Esophagus muscularis mucosa (tissue), 4 donors: ENCODE measurements at regions of chr17 and their contacts with region 1.

Region 1: GRCh38 chr17:7280519-7281429 is 744 bp upstream of the SLC2A4 start:
- DNase-seq: peak; percentile 96
- H3K4me3 ChIP-seq: peak overlapping the region; percentile 64 to 77 (median 69)
- H3K27ac ChIP-seq: peak overlapping the region; percentile 95 to 98 (median 96)
- H3K4me1 ChIP-seq: peaks cover 47 to 57% (median 53%) of the 10 kb centered on the region in 4 donors
- H3K27me3 ChIP-seq: peaks cover 0 to 7% (median 0%) of the 10 kb centered on the region in 4 donors
- CTCF ChIP-seq: peak in 2 of 3 experiments; percentile 95 to 98
- EP300 ChIP-seq: no peak
- POLR2A ChIP-seq: peak; percentile 4

Region 2: DNA sequence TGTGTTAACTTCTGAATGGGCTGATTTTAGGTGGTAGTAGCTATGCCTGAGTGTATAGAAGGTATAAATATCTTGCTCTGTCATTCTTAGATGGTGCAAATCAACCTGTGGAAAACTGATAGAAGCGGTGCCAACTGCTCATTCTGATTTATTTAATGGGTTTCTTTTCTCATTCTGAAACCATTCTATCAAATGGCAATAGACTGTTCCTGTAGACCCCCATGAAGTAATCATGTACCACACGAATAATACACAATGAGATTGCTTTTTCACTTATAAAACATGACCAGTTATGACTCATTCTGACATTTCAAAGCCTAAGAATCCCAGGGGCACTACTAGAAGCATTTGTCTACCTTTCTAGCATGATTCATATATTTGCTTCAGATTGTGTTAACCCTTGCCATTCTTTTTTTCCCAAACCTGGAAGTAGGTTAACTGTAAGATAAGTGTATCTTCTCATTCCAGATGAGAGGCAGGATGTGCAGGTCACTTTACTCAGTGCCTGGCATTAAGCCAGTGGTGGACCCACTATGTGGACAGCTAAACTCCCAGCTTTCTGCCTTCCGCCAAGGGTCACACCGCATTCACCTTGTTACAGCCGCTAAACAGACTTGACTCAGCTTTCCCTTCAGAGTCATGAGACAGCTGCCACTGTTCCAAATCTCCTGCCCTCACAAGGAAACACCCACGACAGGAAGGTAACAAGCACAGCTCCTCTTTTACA is 220.4 kb before region 1 on chr17:
- intact Hi-C with region 1: no loop called
- DNase-seq: no peak
- H3K4me3 ChIP-seq: no peak overlapping the region
- H3K27ac ChIP-seq: no peak overlapping the region
- H3K4me1 ChIP-seq: no peaks in the 10 kb centered on the region
- H3K27me3 ChIP-seq: peaks cover 0 to 20% (median 0%) of the 10 kb centered on the region in 4 donors
- CTCF ChIP-seq: no peak
- EP300 ChIP-seq: no peak
- POLR2A ChIP-seq: no peak

Region 3: DNA sequence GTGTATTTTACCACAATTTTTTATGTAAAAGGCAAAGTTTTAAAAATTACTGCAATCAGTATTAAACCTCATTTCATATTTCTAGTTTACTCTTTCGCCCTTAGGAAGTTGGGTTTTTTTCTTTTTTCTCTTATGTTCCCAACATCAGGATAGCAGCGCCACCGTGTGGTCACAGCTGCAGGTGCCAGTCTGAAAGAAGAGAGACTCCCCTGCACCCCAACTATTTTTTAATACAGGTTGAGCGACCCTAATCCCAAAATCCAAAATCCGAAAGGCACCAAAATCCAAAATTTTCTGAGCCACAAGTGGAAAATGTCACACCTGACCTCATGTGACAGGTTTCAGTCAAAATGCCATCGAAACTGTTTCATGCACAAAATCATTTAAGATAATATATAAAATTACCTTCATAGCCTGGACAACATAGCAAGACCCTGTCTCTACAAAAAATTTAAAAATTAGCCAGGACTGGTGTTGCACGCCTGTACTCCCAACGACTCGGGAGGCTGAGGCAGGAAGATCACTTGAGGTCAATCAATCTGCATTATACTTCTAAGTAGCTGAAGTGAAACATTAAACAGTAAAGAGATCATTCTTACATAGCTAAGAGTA is 144.4 kb before region 1 on chr17:
- intact Hi-C with region 1: no loop called
- DNase-seq: no peak
- H3K4me3 ChIP-seq: no peak overlapping the region
- H3K27ac ChIP-seq: no peak overlapping the region
- H3K4me1 ChIP-seq: peaks cover 2 to 18% (median 8%) of the 10 kb centered on the region in 4 donors
- H3K27me3 ChIP-seq: peaks cover 0 to 86% (median 13%) of the 10 kb centered on the region in 4 donors
- CTCF ChIP-seq: peak; percentile 94 to 96 (median 94)
- EP300 ChIP-seq: no peak
- POLR2A ChIP-seq: no peak

Region 4: DNA sequence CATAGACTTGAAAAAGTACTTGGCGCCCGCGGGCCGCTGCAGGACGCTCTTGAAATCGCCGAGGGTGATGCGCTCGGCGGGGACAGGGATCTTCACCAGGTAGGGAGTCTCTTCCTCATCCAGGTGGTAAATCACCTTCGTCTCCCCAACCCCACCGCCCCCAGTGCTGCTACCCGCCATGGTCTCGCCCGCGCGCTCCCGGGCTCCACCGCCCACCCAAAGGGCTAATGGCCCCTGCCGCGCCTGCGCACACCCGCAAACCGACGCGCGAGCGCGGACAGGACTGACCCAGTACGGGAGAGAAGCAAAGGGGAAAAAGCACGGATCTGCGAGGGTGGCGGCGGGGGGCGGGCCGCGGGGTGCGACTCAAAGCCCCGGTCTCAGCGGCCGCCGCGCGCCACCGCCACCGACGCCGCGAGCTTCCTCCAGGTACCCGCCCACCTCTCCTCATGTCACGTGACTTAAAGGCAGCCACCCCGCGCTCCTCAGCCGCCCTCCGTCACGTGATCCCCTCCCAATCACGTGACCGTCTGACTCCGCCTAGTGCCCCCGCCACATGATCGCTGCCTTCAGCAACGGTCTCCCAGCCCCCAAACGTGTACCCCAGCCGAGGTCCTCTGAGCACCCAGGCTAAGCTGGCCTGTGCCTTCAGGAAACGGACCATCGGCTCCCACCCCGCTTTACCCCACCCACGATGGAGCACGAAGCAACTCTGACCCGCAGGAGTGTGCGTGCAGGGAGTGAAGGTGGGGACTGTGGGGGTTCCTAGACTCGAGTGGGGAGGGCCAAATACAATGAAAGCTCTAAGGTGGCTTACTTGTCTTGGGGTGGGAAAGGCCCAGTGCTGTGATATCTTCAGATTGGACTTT is 46.5 kb before region 1 on chr17 and contains the start of gene DVL2:
- intact Hi-C with region 1: no loop called
- DNase-seq: peak; percentile 99
- H3K4me3 ChIP-seq: peak within 1 kb of the TSS; percentile 74 to 97 (median 96)
- H3K27ac ChIP-seq: peak within 1 kb of the TSS; percentile 86 to 97 (median 94)
- H3K4me1 ChIP-seq: peaks cover 24 to 76% (median 64%) of the 10 kb centered on the region in 4 donors
- H3K27me3 ChIP-seq: no peaks in the 10 kb centered on the region
- CTCF ChIP-seq: no peak
- EP300 ChIP-seq: no peak
- POLR2A ChIP-seq: peak; percentile 45
- total RNA-seq, gene DVL2: 34.5 to 55.5 (median 43.7) TPM

Region 5: DNA sequence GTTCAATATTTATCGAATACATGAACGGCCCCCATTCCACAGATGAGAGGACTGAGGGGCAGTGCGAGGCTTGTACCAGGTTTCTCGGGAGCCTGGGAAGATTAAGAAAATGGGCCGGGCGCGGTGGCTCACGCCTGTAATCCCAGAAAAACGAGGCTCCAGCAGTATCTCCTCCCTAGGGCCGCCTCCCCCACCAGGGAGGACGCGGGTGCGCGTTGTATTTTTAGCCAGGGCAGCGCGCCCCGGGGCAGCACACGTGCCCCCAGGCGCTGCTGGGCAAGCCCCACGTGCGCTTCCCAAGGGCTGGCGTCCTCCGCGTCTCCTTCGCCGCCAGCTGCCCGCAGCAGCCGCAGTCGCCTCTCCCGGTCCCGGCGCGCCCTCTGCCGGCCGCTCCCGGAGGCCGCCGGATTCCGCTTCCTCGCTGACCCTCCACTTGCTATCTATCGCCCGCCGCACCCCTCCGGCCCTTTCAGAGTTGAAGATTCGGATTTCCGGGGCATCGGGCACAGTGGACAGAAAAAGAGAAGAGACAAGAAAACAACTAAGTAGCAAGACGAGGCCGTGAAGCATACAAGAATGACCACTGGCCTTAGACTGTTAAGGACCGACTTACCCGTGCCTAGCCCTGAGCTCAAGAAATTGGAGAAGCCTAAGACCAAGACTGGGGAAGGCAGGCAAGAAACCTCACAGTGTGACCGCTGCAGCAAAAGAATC is 15.6 kb after region 1 on chr17:
- intact Hi-C with region 1: loop called (anchors 1 kb)
- DNase-seq: peak; percentile 98
- H3K4me3 ChIP-seq: peak overlapping the region; percentile 5 to 38 (median 29)
- H3K27ac ChIP-seq: peak overlapping the region; percentile 81 to 96 (median 92)
- H3K4me1 ChIP-seq: peaks cover 49 to 56% (median 55%) of the 10 kb centered on the region in 4 donors
- H3K27me3 ChIP-seq: peaks cover 0 to 36% (median 4%) of the 10 kb centered on the region in 4 donors
- CTCF ChIP-seq: peak; percentile 97 to 99 (median 99)
- EP300 ChIP-seq: peak; percentile 47
- POLR2A ChIP-seq: no peak

Region 6: GRCh38 chr17:7336240-7337175 is 55.7 kb after region 1 on chr17 and contains the start of gene ACAP1:
- intact Hi-C with region 1: loop called (anchors 2 kb)
- DNase-seq: no peak
- H3K4me3 ChIP-seq: peak within 1 kb of the TSS; percentile 14 to 41 (median 15)
- H3K27ac ChIP-seq: no peak within 1 kb of the TSS
- H3K4me1 ChIP-seq: no peaks in the 10 kb centered on the region
- H3K27me3 ChIP-seq: peaks cover 0 to 82% (median 9%) of the 10 kb centered on the region in 4 donors
- CTCF ChIP-seq: no peak
- EP300 ChIP-seq: no peak
- POLR2A ChIP-seq: no peak
- total RNA-seq, gene ACAP1: 2.1 to 11.4 (median 4.6) TPM

Region 7: DNA sequence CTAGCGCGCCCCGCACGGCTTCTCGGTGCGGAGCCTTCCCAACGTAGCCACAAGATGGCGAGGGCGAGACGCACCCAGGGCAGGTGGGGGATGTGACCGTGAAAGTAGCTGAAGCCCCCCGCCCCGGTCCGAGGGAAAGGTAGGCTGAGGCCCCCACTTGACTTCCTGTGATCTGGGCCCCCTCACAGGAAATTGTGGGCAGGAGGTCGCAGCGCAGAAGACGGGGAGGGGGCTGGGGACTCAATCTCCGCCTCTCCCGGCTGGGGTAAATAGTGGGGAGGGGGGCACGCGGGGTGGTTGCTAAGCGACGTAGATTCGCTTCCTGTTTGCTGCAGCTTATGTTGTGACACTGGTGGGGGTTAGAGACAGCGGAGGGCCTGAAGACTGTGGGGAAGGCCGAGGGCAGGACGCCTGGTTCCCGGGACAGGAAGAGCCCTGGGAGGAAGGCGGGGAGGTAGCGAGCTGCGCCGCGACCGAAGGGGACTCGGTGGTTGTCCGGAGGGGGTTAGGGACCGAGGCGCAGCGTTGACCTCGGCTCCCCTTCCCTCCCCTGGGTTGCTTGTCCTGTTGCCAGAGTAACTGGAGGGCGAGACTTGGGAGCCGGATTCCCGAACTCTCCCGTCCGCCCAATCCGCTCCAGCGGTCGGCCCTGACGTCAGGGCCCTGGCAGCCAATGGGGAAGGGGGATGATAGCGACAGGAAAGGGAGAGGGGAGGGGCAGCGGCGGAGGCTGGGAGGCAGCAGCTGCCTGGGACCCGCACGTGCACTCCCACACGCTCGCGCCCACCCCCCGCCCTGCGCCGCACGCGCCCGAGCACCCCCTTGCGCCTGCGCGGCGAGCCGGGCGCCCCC is 554.4 kb after region 1 on chr17:
- intact Hi-C with region 1: no loop called
- DNase-seq: peak; percentile 99
- H3K4me3 ChIP-seq: peak overlapping the region; percentile 62 to 94 (median 80)
- H3K27ac ChIP-seq: peak overlapping the region; percentile 97 to 98 (median 98)
- H3K4me1 ChIP-seq: peaks cover 44 to 56% (median 53%) of the 10 kb centered on the region in 4 donors
- H3K27me3 ChIP-seq: no peaks in the 10 kb centered on the region
- CTCF ChIP-seq: peak; percentile 83 to 87 (median 85)
- EP300 ChIP-seq: no peak
- POLR2A ChIP-seq: peak; percentile 77